GM10248 (cell line): ENCODE measurements at regions of chr1 and their contacts with region 1.

Region 1: DNA sequence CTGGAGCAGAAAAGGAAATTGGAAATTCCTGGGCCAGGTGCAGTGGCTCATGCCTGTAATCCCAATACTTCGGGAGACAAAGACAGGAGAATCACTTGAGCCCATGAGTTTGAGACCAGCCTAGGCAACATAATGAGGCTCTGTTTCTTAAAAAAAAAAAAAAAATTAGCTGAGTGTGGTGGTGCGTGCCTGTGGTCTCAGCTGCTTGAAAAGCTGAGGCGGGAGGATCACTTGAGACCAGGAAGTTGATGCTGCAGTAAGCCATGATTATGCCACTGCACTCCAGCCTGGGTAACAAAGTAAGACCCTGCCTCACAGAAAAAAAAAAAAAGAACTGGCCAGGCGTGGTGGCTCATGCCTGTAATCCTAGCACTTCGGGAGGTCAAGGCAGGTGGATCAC is 56.7 kb downstream of the SRSF11 start:
- DNase-seq: no peak
- CTCF ChIP-seq: no peak

Region 2: GRCh38 chr1:70169018-70169839 is 108.6 kb before region 1 on chr1:
- CTCF ChIA-PET with region 1: no interaction called
- POLR2A ChIA-PET with region 1: no interaction called
- DNase-seq: no peak
- CTCF ChIP-seq: no peak

Region 3: GRCh38 chr1:70247768-70248167 is 30.1 kb before region 1 on chr1:
- CTCF ChIA-PET with region 1: no interaction called
- POLR2A ChIA-PET with region 1: no interaction called
- DNase-seq: no peak
- CTCF ChIP-seq: no peak

Region 4: DNA sequence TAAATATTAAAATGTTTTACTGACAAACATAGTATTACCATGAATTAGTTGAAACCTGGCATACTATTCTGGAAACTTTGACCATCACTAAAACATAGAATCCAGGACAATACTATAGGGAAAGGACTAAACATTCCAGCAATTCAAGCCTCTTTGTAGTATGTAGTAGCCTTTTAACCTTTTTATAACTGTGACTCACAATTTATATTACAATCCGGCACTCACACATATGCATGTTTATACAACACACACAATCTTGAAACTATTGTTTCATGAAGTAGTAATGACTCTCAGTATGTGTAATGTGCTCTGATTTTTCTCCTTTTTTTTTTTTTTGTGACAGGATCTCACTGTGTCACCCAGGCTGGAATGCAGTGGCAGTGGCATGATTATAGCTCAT is 12.3 kb after region 1 on chr1:
- CTCF ChIA-PET with region 1: interaction called, 14 read pairs
- POLR2A ChIA-PET with region 1: no interaction called
- DNase-seq: no peak
- CTCF ChIP-seq: no peak

Region 5: GRCh38 chr1:70387507-70387906 is 109.6 kb after region 1 on chr1:
- CTCF ChIA-PET with region 1: no interaction called
- POLR2A ChIA-PET with region 1: no interaction called
- DNase-seq: no peak
- CTCF ChIP-seq: no peak